Activated CD4-positive, alpha-beta T cell treated with anti-CD3 and anti-CD28 coated beads for 36 hours (primary cell): ENCODE measurements at regions of chr6 and their contacts with region 1.

Region 1: GRCh38 chr6:75208298-75209183 is 2.7 kb upstream of the COL12A1 start:
- DNase-seq: peak; percentile 90
- ATAC-seq: peak; percentile 85
- H3K4me3 Mint-ChIP-seq: peak overlapping the region; percentile 37
- H3K27ac Mint-ChIP-seq: no peak overlapping the region
- H3K4me1 Mint-ChIP-seq: peaks cover 51% of the 10 kb centered on the region
- H3K27me3 Mint-ChIP-seq: peaks cover 72% of the 10 kb centered on the region

Region 2: DNA sequence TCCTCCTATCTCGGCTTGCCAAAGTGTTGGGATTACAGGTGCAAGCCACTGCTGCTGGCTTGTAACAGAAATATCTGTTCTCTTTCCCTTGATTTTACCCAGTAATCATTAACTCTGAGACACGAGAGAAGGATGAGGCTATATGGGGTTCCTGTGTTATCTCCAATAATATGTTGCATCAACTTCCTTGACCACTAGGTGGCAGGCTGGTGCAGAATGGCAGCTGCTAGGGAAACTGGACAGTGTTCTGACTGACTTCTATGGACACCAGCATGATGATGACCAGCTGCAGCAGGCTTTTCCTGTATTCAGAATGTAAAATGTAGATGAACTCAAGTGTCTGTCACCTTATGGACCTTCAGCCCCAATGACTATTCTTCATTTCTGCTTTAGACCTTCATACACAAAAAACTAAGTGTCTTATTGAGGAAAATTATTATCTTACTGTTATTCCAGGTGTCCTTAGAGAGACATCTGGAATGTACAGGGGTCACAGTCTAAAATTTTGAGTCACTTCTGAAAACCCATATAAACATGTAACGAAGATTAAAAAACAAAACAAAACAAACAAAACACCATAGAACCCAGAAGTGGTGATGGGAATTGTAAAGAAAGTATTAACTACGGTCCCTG is 1533.0 kb before region 1 on chr6:
- CTCF ChIA-PET with region 1: interaction called, 8 read pairs
- POLR2A ChIA-PET with region 1: no interaction called
- intact Hi-C with region 1: loop called in 1 of 2 experiments (anchors 10 kb)
- DNase-seq: peak; percentile 85
- ATAC-seq: peak; percentile 96
- H3K4me3 Mint-ChIP-seq: no peak overlapping the region
- H3K27ac Mint-ChIP-seq: no peak overlapping the region
- H3K4me1 Mint-ChIP-seq: peaks cover 1% of the 10 kb centered on the region
- H3K27me3 Mint-ChIP-seq: peaks cover 13% of the 10 kb centered on the region

Region 3: DNA sequence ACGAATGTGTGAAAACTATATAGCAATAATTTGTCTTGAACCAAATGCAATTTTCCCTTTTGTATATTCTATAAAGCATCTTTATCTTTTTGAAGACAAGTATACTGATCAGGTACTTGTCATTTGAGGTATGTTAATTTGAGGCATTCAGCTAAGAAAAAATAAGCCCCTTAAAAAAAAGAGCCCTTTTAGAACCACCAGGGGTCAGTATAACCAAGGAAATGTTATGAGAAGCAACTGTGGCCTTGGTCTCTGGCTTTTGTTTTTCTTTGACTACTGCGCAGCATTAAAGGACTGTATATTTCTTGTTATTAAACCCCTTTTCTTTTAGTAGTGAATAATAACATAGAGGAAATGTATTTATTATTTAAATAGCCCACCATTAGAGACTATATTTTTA is 1469.4 kb before region 1 on chr6:
- CTCF ChIA-PET with region 1: interaction called, 72 read pairs
- POLR2A ChIA-PET with region 1: no interaction called
- intact Hi-C with region 1: loop called (anchors 1 kb)
- DNase-seq: no peak
- ATAC-seq: peak; percentile 68
- H3K4me3 Mint-ChIP-seq: no peak overlapping the region
- H3K27ac Mint-ChIP-seq: no peak overlapping the region
- H3K4me1 Mint-ChIP-seq: no peaks in the 10 kb centered on the region
- H3K27me3 Mint-ChIP-seq: no peaks in the 10 kb centered on the region

Region 4: GRCh38 chr6:73969971-73970970 is 1238.3 kb before region 1 on chr6:
- CTCF ChIA-PET with region 1: interaction called, 4 read pairs
- POLR2A ChIA-PET with region 1: no interaction called
- intact Hi-C with region 1: loop called (anchors 1 to 2 kb)
- DNase-seq: peak; percentile 8
- ATAC-seq: peak; percentile 33
- H3K4me3 Mint-ChIP-seq: no peak overlapping the region
- H3K27ac Mint-ChIP-seq: no peak overlapping the region
- H3K4me1 Mint-ChIP-seq: no peaks in the 10 kb centered on the region
- H3K27me3 Mint-ChIP-seq: peaks cover 1% of the 10 kb centered on the region

Region 5: DNA sequence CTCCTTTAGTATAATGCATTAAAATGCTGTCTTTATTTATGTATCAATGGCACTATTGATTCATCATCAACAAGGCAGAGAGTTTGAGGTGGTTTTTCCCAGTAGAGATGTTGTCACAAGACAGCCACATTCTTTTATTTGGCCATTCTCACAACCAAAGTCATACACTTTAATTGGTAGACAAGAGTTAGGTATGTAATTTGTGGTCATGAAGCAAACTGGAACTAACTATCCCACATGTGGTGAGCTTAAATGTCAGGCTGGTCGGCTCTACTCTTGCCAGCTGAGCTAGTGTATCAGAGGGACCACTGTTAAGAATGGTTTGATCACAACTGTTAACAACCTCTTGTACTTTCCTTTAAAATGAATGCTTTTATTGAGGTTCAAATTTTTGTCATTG is 797.9 kb before region 1 on chr6:
- CTCF ChIA-PET with region 1: interaction called, 5 read pairs
- POLR2A ChIA-PET with region 1: no interaction called
- intact Hi-C with region 1: loop called in 1 of 2 experiments (anchors 10 kb)
- DNase-seq: no peak
- ATAC-seq: no peak
- H3K4me3 Mint-ChIP-seq: no peak overlapping the region
- H3K27ac Mint-ChIP-seq: no peak overlapping the region
- H3K4me1 Mint-ChIP-seq: no peaks in the 10 kb centered on the region
- H3K27me3 Mint-ChIP-seq: no peaks in the 10 kb centered on the region

Region 6: GRCh38 chr6:75154973-75155372 is 53.6 kb before region 1 on chr6:
- CTCF ChIA-PET with region 1: interaction called, 10 read pairs
- POLR2A ChIA-PET with region 1: no interaction called
- intact Hi-C with region 1: no loop called
- DNase-seq: no peak
- ATAC-seq: no peak
- H3K4me3 Mint-ChIP-seq: no peak overlapping the region
- H3K27ac Mint-ChIP-seq: no peak overlapping the region
- H3K4me1 Mint-ChIP-seq: no peaks in the 10 kb centered on the region
- H3K27me3 Mint-ChIP-seq: peaks cover 20% of the 10 kb centered on the region

Region 7: DNA sequence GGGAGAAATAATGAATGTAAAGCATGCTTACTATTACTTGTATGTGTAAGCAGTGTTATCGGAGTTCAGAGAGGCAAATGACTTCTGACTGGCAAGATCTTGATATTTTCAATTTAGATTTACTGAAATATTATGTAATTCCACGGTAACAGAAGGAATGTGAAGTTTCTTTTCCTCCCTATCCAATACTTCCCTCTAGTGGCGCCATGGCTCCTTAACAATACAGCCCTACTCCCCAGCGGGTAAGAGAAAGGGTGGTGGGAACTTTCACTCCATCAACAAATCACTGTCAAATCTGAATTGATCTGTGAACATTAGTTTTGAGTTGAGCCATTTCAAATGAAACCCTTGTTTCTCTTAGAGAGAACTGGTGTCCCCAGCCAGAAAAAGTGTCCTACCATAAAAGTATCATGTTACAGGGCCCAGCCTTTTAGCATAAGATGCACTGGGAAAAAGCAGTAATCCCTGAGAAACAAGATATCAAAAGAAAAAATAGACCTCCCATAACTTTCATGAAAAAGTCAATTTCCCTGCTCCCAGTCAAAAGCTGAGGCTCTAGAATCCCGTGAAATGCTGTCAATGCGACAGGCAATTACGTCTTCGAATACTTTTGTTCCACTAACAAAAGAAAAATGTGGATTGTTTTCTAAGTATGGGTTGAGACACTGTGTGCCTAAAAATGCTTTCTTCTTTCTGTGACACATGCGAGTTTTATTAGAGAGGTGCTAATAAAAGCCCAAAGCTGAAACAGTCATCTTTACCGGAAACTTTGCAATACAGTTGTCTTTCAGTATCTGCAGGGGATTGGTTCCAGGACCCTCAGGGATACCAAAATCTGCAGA is 22.2 kb after region 1 on chr6:
- CTCF ChIA-PET with region 1: interaction called, 18 read pairs
- POLR2A ChIA-PET with region 1: no interaction called
- intact Hi-C with region 1: no loop called
- DNase-seq: peak; percentile 19
- ATAC-seq: no peak
- H3K4me3 Mint-ChIP-seq: no peak overlapping the region
- H3K27ac Mint-ChIP-seq: no peak overlapping the region
- H3K4me1 Mint-ChIP-seq: no peaks in the 10 kb centered on the region
- H3K27me3 Mint-ChIP-seq: no peaks in the 10 kb centered on the region